Activated naive CD4-positive, alpha-beta T cell treated with anti-CD3 and anti-CD28 coated beads, Interleukin-2, amount 10 ng/mL, durations not matched to agents 7 days and 5 days (primary cell): ENCODE measurements at regions of chr22 and their contacts with region 1.

Region 1: GRCh38 chr22:20463324-20464095 is 25.9 kb upstream of the SCARF2 start:
- DNase-seq: peak; percentile 64
- H3K4me3 Mint-ChIP-seq: peak overlapping the region; percentile 66
- H3K27ac Mint-ChIP-seq: peak overlapping the region; percentile 100
- H3K4me1 Mint-ChIP-seq: peaks cover 66% of the 10 kb centered on the region
- H3K27me3 Mint-ChIP-seq: no peaks in the 10 kb centered on the region

Region 2: GRCh38 chr22:20312396-20313191 is 150.9 kb before region 1 on chr22:
- CTCF ChIA-PET with region 1: no interaction called
- DNase-seq: peak; percentile 20
- H3K4me3 Mint-ChIP-seq: no peak overlapping the region
- H3K27ac Mint-ChIP-seq: no peak overlapping the region
- H3K4me1 Mint-ChIP-seq: peaks cover 12% of the 10 kb centered on the region
- H3K27me3 Mint-ChIP-seq: no peaks in the 10 kb centered on the region

Region 3: DNA sequence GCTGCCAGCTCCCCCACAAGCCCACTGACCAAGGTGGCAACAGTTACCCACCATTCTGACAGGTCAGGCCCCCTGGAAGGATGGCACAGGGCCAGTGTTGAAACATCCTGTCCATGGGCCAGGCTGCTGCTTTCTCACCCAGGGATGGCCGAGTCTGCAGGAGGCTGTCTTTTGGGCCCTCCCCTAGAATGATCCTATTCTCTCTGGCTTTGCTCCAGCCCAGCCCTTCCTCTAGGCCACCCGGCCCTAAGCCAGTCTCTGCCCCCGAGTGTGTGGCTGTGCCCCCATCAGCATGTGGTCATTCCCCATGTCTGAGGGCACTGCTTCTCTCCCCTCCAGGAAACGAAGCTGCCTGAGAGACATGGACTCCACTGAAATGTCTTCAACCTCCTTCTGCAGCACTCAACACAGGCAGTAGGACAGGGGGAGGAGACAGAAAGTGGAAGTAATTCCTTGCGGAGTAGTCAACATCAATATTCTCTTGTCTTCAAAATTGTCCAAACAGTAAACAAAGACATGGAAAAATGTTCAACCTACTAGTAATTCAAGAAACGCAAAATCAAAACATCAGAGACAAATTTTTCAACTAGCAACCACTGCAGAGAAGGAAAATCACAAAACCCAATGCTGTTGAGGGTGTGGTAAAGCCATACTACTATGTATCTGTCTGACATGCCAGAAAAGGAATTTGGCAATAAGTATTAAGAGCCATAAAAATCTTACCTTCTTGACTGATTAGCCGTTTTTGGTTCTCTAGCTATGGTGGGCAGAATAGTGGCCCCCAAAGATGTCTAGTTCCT is 20.8 kb before region 1 on chr22:
- CTCF ChIA-PET with region 1: no interaction called
- DNase-seq: peak; percentile 18
- H3K4me3 Mint-ChIP-seq: no peak overlapping the region
- H3K27ac Mint-ChIP-seq: no peak overlapping the region
- H3K4me1 Mint-ChIP-seq: no peaks in the 10 kb centered on the region
- H3K27me3 Mint-ChIP-seq: peaks cover 28% of the 10 kb centered on the region

Region 4: GRCh38 chr22:20494978-20495860 is 31.7 kb after region 1 on chr22 and contains the start of gene KLHL22:
- CTCF ChIA-PET with region 1: interaction called, 10 read pairs
- DNase-seq: peak; percentile 51
- H3K4me3 Mint-ChIP-seq: peak within 1 kb of the TSS; percentile 90
- H3K27ac Mint-ChIP-seq: peak within 1 kb of the TSS; percentile 88
- H3K4me1 Mint-ChIP-seq: peaks cover 48% of the 10 kb centered on the region
- H3K27me3 Mint-ChIP-seq: peaks cover 11% of the 10 kb centered on the region